Naive thymus-derived CD4-positive, alpha-beta T cell (primary cell): ENCODE measurements at regions of chr2 and their contacts with region 1.

Region 1: GRCh38 chr2:126527836-126528507 is 128.0 kb upstream of the GYPC start:
- DNase-seq: peak; percentile 43 to 74 (median 64)
- ATAC-seq: peak; percentile 79
- H3K4me3 ChIP-seq: no peak overlapping the region
- H3K4me3 Mint-ChIP-seq: no peak overlapping the region
- H3K27ac ChIP-seq: no peak overlapping the region
- H3K27ac Mint-ChIP-seq: no peak overlapping the region
- H3K4me1 ChIP-seq: no peaks in the 10 kb centered on the region
- H3K4me1 Mint-ChIP-seq: no peaks in the 10 kb centered on the region
- H3K27me3 ChIP-seq: no peaks in the 10 kb centered on the region
- H3K27me3 Mint-ChIP-seq: peaks cover 0 to 3% (median 0%) of the 10 kb centered on the region in 5 donors

Region 2: GRCh38 chr2:126449677-126450076 is 78.3 kb before region 1 on chr2:
- CTCF ChIA-PET with region 1: no interaction called
- POLR2A ChIA-PET with region 1: no interaction called
- intact Hi-C with region 1: no loop called
- DNase-seq: no peak
- ATAC-seq: no peak
- H3K4me3 ChIP-seq: no peak overlapping the region
- H3K4me3 Mint-ChIP-seq: no peak overlapping the region
- H3K27ac ChIP-seq: no peak overlapping the region
- H3K27ac Mint-ChIP-seq: no peak overlapping the region
- H3K4me1 ChIP-seq: no peaks in the 10 kb centered on the region
- H3K4me1 Mint-ChIP-seq: peaks cover 0 to 4% (median 0%) of the 10 kb centered on the region in 7 donors
- H3K27me3 ChIP-seq: no peaks in the 10 kb centered on the region
- H3K27me3 Mint-ChIP-seq: peaks cover 0 to 6% (median 0%) of the 10 kb centered on the region in 5 donors

Region 3: GRCh38 chr2:126749537-126749936 is 221.6 kb after region 1 on chr2:
- CTCF ChIA-PET with region 1: interaction called, 14 read pairs
- POLR2A ChIA-PET with region 1: no interaction called
- intact Hi-C with region 1: loop called in 1 of 2 experiments (anchors 1 kb)
- DNase-seq: peak in 2 of 9 donors; percentile 14 to 15
- ATAC-seq: no peak
- H3K4me3 ChIP-seq: no peak overlapping the region
- H3K4me3 Mint-ChIP-seq: no peak overlapping the region
- H3K27ac ChIP-seq: no peak overlapping the region
- H3K27ac Mint-ChIP-seq: peak overlapping the region in 2 of 9 donors; percentile 5 to 11
- H3K4me1 ChIP-seq: no peaks in the 10 kb centered on the region
- H3K4me1 Mint-ChIP-seq: peaks cover 2 to 18% (median 6%) of the 10 kb centered on the region in 7 donors
- H3K27me3 ChIP-seq: no peaks in the 10 kb centered on the region
- H3K27me3 Mint-ChIP-seq: peaks cover 0 to 8% (median 0%) of the 10 kb centered on the region in 5 donors

Region 4: GRCh38 chr2:126907671-126908070 is 379.7 kb after region 1 on chr2:
- CTCF ChIA-PET with region 1: no interaction called
- POLR2A ChIA-PET with region 1: no interaction called
- intact Hi-C with region 1: no loop called
- DNase-seq: no peak
- ATAC-seq: no peak
- H3K4me3 ChIP-seq: no peak overlapping the region
- H3K4me3 Mint-ChIP-seq: no peak overlapping the region
- H3K27ac ChIP-seq: no peak overlapping the region
- H3K27ac Mint-ChIP-seq: no peak overlapping the region
- H3K4me1 ChIP-seq: no peaks in the 10 kb centered on the region
- H3K4me1 Mint-ChIP-seq: no peaks in the 10 kb centered on the region
- H3K27me3 ChIP-seq: no peaks in the 10 kb centered on the region
- H3K27me3 Mint-ChIP-seq: peaks cover 0 to 24% (median 4%) of the 10 kb centered on the region in 5 donors